Heart left ventricle (tissue), 16 donors: ENCODE measurements at regions of chr15 and their contacts with region 1.

Region 1: GRCh38 chr15:90691982-90692773 is 25.0 kb upstream of the BLM start:
- DNase-seq: no peak
- ATAC-seq: no peak
- H3K4me3 ChIP-seq: no peak overlapping the region
- H3K27ac ChIP-seq: no peak overlapping the region
- H3K4me1 ChIP-seq: peaks cover 0 to 6% (median 0%) of the 10 kb centered on the region in 12 donors
- H3K27me3 ChIP-seq: no peaks in the 10 kb centered on the region
- CTCF ChIP-seq: no peak
- POLR2A ChIP-seq: no peak

Region 2: GRCh38 chr15:90519688-90520087 is 172.5 kb before region 1 on chr15:
- intact Hi-C with region 1: loop called in 1 of 10 experiments (anchors 10 kb)
- DNase-seq: no peak
- ATAC-seq: no peak
- H3K4me3 ChIP-seq: no peak overlapping the region
- H3K27ac ChIP-seq: no peak overlapping the region
- H3K4me1 ChIP-seq: peaks cover 0 to 7% (median 0%) of the 10 kb centered on the region in 12 donors
- H3K27me3 ChIP-seq: no peaks in the 10 kb centered on the region
- CTCF ChIP-seq: no peak
- POLR2A ChIP-seq: no peak

Region 3: GRCh38 chr15:90648137-90649070 is 43.8 kb before region 1 on chr15:
- intact Hi-C with region 1: loop called (anchors 1 to 5 kb)
- DNase-seq: peak; percentile 61 to 79 (median 75)
- ATAC-seq: peak; percentile 66 to 89 (median 74)
- H3K4me3 ChIP-seq: peak overlapping the region in 1 of 12 donors; percentile 2
- H3K27ac ChIP-seq: peak overlapping the region; percentile 16 to 80 (median 58)
- H3K4me1 ChIP-seq: peaks cover 0 to 31% (median 15%) of the 10 kb centered on the region in 12 donors
- H3K27me3 ChIP-seq: no peaks in the 10 kb centered on the region
- CTCF ChIP-seq: peak; percentile 80 to 97 (median 93)
- POLR2A ChIP-seq: no peak

Region 4: GRCh38 chr15:90774731-90775484 is 82.7 kb after region 1 on chr15:
- intact Hi-C with region 1: no loop called
- DNase-seq: no peak
- ATAC-seq: no peak
- H3K4me3 ChIP-seq: no peak overlapping the region
- H3K27ac ChIP-seq: no peak overlapping the region
- H3K4me1 ChIP-seq: peaks cover 0 to 8% (median 0%) of the 10 kb centered on the region in 12 donors
- H3K27me3 ChIP-seq: no peaks in the 10 kb centered on the region
- CTCF ChIP-seq: no peak
- POLR2A ChIP-seq: no peak

Region 5: DNA sequence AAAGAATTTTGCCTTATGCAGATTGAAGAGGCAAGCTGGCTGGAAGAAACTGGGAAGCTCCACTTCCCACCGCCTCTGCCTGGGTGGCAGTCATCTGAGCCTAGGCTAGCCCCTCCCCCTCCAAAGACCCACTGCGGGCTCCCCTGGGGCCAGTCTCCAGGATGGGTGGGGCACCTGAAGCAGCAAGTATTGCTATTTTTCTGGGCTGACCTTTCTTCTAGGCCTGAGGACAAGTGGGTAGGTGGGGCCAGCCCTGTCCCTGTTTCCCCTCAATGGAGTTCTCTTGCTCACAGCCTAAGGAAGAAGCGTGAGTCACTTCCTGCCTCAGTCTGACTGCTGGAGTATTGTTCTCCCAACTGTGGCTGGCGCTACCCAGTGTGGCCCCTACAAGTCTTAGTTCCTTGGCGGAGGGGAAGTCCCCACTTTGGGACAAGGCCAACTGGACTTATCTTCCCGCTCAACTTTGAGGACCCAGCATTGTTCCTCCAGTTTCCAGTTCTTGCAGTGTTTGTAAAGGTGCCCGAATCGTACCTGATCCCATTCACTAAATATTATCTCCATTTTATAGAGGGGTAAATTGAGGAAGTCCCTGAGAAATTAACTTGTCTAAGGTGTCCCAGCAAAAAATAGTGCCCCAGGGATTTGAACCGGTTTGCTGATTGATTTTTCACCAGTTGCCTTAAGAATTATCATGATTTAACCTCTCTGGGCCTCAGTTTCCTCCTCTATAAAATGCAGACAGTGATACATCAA is 177.6 kb after region 1 on chr15:
- intact Hi-C with region 1: no loop called
- DNase-seq: peak; percentile 83 to 92 (median 87)
- ATAC-seq: peak; percentile 80 to 93 (median 86)
- H3K4me3 ChIP-seq: peak overlapping the region in 10 of 12 donors; percentile 80 to 96 (median 89)
- H3K27ac ChIP-seq: peak overlapping the region; percentile 91 to 100 (median 98)
- H3K4me1 ChIP-seq: peaks cover 16 to 62% (median 46%) of the 10 kb centered on the region in 12 donors
- H3K27me3 ChIP-seq: no peaks in the 10 kb centered on the region
- CTCF ChIP-seq: no peak
- POLR2A ChIP-seq: no peak